Prostate gland (tissue), 2 donors: ENCODE measurements at regions of chr1 and their contacts with region 1.

Region 1: GRCh38 chr1:27097484-27097917 is 57.4 kb downstream of the SLC9A1 start:
- DNase-seq: peak; percentile 74
- H3K4me3 ChIP-seq: no peak overlapping the region
- H3K27ac ChIP-seq: no peak overlapping the region
- H3K4me1 ChIP-seq: peaks cover 6% of the 10 kb centered on the region
- H3K27me3 ChIP-seq: no peaks in the 10 kb centered on the region
- CTCF ChIP-seq: peak; percentile 92 to 98 (median 94)
- POLR2A ChIP-seq: no peak

Region 2: DNA sequence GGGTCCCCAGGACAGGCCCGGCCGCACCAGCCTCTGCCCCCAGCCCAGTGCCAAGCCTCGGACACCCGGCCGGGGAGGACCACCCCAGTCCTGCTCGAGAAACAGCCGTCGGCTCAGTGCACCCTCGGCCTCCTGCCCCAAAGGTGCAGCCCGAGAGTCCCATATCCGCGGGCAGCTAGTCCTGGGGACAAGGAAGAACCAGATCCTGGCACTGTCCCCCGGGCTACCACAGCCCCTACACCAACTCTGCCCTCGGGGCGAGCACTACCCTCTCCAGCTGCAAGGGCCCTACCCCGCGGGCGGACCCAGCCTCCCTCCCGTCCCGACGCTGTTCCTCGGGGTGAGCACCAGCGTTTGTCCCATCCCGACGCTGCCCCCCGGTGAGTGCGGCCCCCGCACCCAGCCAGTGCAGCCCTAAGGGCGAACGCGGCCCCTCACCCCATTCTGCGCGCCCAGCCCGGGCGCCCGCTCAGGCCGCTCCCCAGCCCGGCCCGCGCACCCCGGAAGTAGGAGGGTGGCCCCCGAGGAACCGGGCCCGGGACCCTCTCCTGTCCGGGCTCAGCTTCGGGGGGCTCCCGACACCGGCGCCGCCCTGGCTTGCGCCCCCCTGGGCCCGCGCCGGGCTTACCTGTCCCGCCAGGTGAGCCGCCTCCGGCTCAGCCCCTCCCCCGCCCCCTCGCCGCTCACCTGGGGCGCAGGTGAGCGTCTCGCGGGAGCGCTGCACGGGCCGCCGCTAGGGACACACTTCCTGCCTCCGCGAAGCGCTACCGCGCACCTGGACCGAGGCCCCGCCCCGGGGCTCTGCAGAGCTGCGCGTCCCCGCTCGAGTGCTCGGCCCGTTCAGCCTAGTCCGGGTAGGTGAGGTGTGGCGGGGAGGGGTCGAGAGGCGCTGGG is 137.5 kb before region 1 on chr1 and contains the start of gene KDF1:
- intact Hi-C with region 1: loop called (anchors 10 kb)
- DNase-seq: peak; percentile 87
- H3K4me3 ChIP-seq: peak within 1 kb of the TSS; percentile 62 to 78
- H3K27ac ChIP-seq: peak within 1 kb of the TSS; percentile 68 to 73
- H3K4me1 ChIP-seq: peaks cover 4% of the 10 kb centered on the region
- H3K27me3 ChIP-seq: no peaks in the 10 kb centered on the region
- CTCF ChIP-seq: peak in 3 of 4 experiments; percentile 25 to 75 (median 67)
- POLR2A ChIP-seq: peak; percentile 79
- total RNA-seq, gene KDF1: 14.0 to 42.8 TPM

Region 3: DNA sequence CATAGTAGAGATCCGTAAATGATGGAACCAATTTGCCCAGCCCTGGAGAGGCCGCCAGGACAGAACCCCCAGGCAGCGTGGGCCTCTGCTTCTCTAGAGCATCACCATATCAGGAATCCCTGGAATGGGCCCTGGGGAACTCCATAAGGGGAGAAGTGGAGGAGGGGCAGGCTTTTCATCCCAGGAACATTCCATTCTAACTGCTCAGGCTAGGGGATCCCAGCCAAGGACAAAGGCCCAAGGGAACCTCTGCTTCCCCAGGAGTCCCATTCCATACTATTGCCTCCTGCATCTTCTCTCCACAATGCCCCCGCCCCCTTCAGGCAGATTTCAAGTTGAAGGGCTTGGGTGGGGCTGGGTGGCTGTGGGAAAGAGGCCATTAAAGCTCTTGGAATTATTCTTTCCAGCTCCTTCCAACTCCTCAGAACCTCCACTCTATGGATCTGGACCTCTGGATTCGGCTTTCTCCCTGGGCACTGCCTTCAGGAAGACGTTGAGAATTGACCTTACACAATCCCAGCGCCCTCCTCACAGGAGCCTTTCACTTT is 98.0 kb before region 1 on chr1:
- intact Hi-C with region 1: loop called (anchors 2 kb)
- DNase-seq: peak; percentile 72
- H3K4me3 ChIP-seq: no peak overlapping the region
- H3K27ac ChIP-seq: peak overlapping the region; percentile 68 to 77
- H3K4me1 ChIP-seq: peaks cover 3% of the 10 kb centered on the region
- H3K27me3 ChIP-seq: no peaks in the 10 kb centered on the region
- CTCF ChIP-seq: no peak
- POLR2A ChIP-seq: no peak

Region 4: GRCh38 chr1:27044613-27045151 is 52.8 kb before region 1 on chr1:
- intact Hi-C with region 1: loop called (anchors 2 kb)
- DNase-seq: peak; percentile 86
- H3K4me3 ChIP-seq: no peak overlapping the region
- H3K27ac ChIP-seq: no peak overlapping the region
- H3K4me1 ChIP-seq: no peaks in the 10 kb centered on the region
- H3K27me3 ChIP-seq: no peaks in the 10 kb centered on the region
- CTCF ChIP-seq: peak; percentile 93 to 99 (median 98)
- POLR2A ChIP-seq: no peak

Region 5: GRCh38 chr1:27445177-27445936 is 347.9 kb after region 1 on chr1:
- intact Hi-C with region 1: no loop called
- DNase-seq: no peak
- H3K4me3 ChIP-seq: no peak overlapping the region
- H3K27ac ChIP-seq: no peak overlapping the region
- H3K4me1 ChIP-seq: no peaks in the 10 kb centered on the region
- H3K27me3 ChIP-seq: no peaks in the 10 kb centered on the region
- CTCF ChIP-seq: no peak
- POLR2A ChIP-seq: no peak